ENCODE measurements at regions of chr4 and their contacts with region 1.

Region 1: GRCh38 chr4:119041951-119042560 is 93.6 kb upstream of the MYOZ2 start:
- DNase-seq: peak; percentile 63
- H3K4me3 ChIP-seq: no peak overlapping the region
- H3K27ac ChIP-seq: peak overlapping the region; percentile 16 to 66; a peak in 1 of 4 replicates
- H3K4me1 ChIP-seq: peaks cover 8 to 29% of the 10 kb centered on the region in 2 experiments
- H3K27me3 ChIP-seq: no peaks in the 10 kb centered on the region
- CTCF ChIP-seq: peak; percentile 78
- EP300 ChIP-seq: no peak
- RAD21 ChIP-seq: peak; percentile 81

Region 2: GRCh38 chr4:118981839-118982381 is 60.1 kb before region 1 on chr4:
- CTCF ChIA-PET with region 1: interaction called, 67 read pairs
- POLR2A ChIA-PET with region 1: no interaction called
- DNase-seq: peak; percentile 73
- H3K4me3 ChIP-seq: no peak overlapping the region
- H3K27ac ChIP-seq: peak overlapping the region in 1 of 2 experiments; percentile 28; a peak in 1 of 4 replicates
- H3K4me1 ChIP-seq: peaks cover 5 to 9% of the 10 kb centered on the region in 2 experiments
- H3K27me3 ChIP-seq: no peaks in the 10 kb centered on the region
- CTCF ChIP-seq: peak; percentile 87
- EP300 ChIP-seq: no peak
- RAD21 ChIP-seq: peak; percentile 97

Region 3: DNA sequence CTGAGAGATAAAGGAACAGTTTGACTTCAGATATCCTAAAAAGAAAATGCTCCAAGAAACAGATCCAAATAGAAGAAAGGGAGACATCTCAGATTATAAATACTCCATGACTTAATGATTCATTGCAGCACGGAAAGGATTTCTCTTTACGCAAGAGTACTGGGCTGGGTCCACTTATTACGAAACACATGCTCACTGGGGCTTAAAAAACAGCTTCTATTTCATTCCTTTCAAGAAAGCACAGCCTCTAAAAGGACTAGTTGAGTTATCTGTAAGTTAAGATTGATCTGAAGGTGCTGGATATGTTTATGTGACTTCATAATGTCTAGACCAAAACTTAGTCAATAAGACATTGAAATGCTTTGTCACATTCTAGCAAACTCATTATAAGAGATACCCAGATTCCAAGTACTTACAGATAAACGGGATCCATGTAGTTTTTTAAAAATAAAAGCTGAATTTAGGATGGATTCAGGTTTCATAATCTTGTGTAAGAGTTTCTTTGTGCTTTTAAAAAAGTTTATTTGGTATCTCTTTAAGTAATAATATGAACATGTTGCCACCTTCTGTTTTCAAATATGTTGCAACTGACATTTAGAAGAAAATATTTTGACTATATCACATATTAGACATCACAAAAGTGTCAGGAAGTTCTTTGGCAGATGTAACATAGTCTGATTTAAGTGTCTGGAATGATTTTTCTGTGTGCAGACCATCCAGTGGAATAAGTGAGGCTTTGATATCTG is 16.0 kb before region 1 on chr4:
- CTCF ChIA-PET with region 1: interaction called, 10 read pairs
- POLR2A ChIA-PET with region 1: no interaction called
- DNase-seq: no peak
- H3K4me3 ChIP-seq: peak overlapping the region in 1 of 2 experiments; percentile 5; a peak in 1 of 4 replicates
- H3K27ac ChIP-seq: peak overlapping the region; percentile 34 to 63; a peak in 3 of 4 replicates
- H3K4me1 ChIP-seq: peaks cover 0 to 24% of the 10 kb centered on the region in 2 experiments; a peak in 3 of 4 replicates
- H3K27me3 ChIP-seq: no peaks in the 10 kb centered on the region
- CTCF ChIP-seq: no peak
- EP300 ChIP-seq: no peak
- RAD21 ChIP-seq: no peak

Region 4: DNA sequence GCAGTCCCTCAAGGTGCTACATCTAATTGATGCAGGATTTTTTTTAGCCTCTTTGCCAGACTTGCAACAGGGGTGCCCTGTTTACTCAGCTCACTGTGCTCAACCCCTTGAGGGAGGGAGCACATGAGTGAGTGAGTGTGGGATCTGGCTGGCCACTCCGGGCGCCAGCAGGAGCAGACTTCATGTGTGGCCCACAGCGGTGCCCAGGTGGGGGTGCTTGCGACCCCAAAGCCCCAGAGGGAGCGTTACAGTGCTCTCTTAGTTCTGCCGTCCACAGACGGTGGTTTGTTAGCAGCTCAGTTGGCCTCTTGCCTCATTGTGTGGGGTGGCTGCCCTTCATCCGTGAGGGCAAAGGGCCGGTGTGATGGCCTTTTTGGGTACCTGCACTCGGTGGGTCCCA is 11.9 kb after region 1 on chr4:
- CTCF ChIA-PET with region 1: interaction called, 15 read pairs
- POLR2A ChIA-PET with region 1: no interaction called
- DNase-seq: no peak
- H3K4me3 ChIP-seq: no peak overlapping the region
- H3K27ac ChIP-seq: no peak overlapping the region
- H3K4me1 ChIP-seq: no peaks in the 10 kb centered on the region
- H3K27me3 ChIP-seq: no peaks in the 10 kb centered on the region
- CTCF ChIP-seq: no peak
- EP300 ChIP-seq: no peak
- RAD21 ChIP-seq: no peak

Region 5: DNA sequence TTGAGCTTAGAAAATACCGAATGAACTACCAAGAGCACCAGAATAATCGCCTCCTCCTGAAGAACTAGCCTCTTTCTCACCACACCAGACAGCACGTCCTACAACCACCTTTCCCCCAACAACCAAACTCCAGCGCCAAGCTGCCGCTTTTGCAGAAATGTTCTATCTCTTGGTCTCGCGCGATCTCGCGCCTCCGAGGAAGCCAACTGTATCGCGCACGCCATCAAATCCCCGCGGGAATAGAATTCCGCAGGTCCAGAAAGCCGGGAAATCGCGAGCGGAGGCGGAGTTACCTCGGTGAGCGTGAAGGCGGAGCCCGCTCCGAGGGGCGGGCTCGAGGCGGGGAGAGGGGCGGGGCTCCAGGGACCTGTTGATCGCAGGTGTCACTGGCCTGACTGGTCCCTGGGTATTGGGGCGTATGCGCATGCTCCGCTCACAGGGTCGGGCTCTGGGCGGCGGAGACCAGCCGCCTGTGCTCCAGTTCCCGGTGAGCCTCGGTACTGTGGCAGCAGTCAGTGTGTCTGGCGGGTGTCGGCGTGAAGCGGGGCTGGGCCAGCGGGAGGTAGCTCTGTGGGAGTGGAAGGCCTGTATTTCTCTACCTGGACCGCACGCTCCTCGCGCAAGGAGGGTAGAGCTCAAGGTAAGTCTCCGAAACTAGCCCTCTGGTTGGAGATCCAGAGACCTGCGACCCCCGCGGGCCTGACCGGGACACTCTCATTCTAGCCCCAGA is 170.3 kb after region 1 on chr4 and contains the start of gene USP53:
- CTCF ChIA-PET with region 1: interaction called, 13 read pairs
- POLR2A ChIA-PET with region 1: no interaction called
- DNase-seq: peak; percentile 97
- H3K4me3 ChIP-seq: peak within 1 kb of the TSS; percentile 93 to 94
- H3K27ac ChIP-seq: peak within 1 kb of the TSS; percentile 92 to 94
- H3K4me1 ChIP-seq: peaks cover 6 to 11% of the 10 kb centered on the region in 2 experiments
- H3K27me3 ChIP-seq: no peaks in the 10 kb centered on the region
- CTCF ChIP-seq: no peak
- EP300 ChIP-seq: no peak
- RAD21 ChIP-seq: no peak
- polyA plus RNA-seq, gene USP53: 8.1 and 14.9 TPM in 2 replicates

Region 6: GRCh38 chr4:119290598-119290997 is 248.5 kb after region 1 on chr4:
- CTCF ChIA-PET with region 1: interaction called, 36 read pairs
- POLR2A ChIA-PET with region 1: no interaction called
- DNase-seq: no peak
- H3K4me3 ChIP-seq: no peak overlapping the region
- H3K27ac ChIP-seq: no peak overlapping the region
- H3K4me1 ChIP-seq: no peaks in the 10 kb centered on the region; a peak in 2 of 4 replicates
- H3K27me3 ChIP-seq: no peaks in the 10 kb centered on the region
- CTCF ChIP-seq: no peak
- EP300 ChIP-seq: no peak
- RAD21 ChIP-seq: no peak

Region 7: DNA sequence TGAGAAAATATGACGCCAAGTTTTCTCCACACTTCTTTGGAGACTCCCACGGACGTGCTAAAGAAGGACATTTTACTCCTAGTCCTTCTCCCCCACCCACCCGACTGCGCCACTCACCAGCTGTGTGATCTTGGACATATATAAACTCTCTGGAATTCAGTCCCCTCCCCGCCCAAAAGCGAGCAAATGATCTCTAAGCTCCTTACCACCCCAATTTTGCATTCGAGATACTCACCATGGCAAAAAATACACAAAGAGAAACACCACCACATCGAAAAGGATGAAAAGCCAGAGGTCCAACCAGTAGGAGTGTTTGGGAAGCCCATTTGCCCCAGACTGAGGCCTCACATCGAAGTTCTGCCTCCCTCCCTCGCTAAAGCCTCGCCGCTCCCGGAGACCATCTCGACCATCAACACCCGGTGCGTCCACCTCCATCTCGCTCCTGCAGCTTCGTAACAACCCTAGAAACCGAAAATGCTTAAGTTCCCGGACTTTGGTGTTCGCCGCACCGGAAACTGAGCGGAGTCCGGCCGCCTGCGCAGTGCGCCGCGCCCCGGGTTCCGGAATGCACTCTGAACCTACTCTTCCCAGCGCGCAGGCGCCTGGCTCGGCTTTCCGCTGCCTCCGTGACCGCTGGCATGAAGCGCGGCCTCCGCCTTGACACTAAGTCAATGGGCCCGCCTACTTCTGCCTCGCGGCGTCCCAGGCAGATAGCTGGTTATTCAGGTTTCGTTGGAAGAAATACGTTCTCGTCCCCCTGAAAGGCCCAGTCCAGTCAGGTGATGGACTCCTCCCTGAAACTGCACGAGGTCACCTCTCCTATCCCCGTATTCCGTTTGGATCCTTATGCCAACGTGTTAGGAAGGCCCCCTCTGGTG is 258.3 kb after region 1 on chr4:
- CTCF ChIA-PET with region 1: interaction called, 16 read pairs
- POLR2A ChIA-PET with region 1: no interaction called
- DNase-seq: peak; percentile 87
- H3K4me3 ChIP-seq: peak overlapping the region; percentile 82 to 87
- H3K27ac ChIP-seq: peak overlapping the region; percentile 91 to 95
- H3K4me1 ChIP-seq: peaks cover 0 to 7% of the 10 kb centered on the region in 2 experiments; a peak in 2 of 4 replicates
- H3K27me3 ChIP-seq: no peaks in the 10 kb centered on the region
- CTCF ChIP-seq: peak; percentile 17; the same call in 1 of the 2 replicates
- EP300 ChIP-seq: no peak
- RAD21 ChIP-seq: no peak

Region 8: DNA sequence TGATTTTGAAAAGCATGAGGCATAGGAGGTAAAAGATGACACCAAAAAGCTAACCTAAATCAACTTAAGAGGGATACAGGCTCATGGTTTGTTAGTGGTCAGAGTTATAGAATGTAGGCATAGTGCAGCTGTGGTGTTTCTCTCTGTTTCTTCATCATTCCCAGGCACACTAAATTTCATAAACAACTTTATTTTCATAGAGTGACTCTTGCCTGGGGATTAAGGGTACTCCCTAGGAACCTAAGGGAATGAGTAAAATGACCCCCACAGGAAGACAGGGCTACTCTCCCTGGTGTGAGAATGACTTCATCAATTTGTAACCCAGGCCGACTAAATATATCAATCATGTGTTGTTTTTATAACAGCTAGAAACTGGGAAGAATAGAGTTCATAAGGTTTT is 268.8 kb after region 1 on chr4:
- CTCF ChIA-PET with region 1: no interaction called
- POLR2A ChIA-PET with region 1: no interaction called
- DNase-seq: no peak
- H3K4me3 ChIP-seq: no peak overlapping the region
- H3K27ac ChIP-seq: no peak overlapping the region
- H3K4me1 ChIP-seq: no peaks in the 10 kb centered on the region
- H3K27me3 ChIP-seq: no peaks in the 10 kb centered on the region
- CTCF ChIP-seq: no peak
- EP300 ChIP-seq: no peak
- RAD21 ChIP-seq: no peak

Measured in SK-N-SH (cell line).